ENCODE measurements at regions of chr22 and their contacts with region 1.

Region 1: DNA sequence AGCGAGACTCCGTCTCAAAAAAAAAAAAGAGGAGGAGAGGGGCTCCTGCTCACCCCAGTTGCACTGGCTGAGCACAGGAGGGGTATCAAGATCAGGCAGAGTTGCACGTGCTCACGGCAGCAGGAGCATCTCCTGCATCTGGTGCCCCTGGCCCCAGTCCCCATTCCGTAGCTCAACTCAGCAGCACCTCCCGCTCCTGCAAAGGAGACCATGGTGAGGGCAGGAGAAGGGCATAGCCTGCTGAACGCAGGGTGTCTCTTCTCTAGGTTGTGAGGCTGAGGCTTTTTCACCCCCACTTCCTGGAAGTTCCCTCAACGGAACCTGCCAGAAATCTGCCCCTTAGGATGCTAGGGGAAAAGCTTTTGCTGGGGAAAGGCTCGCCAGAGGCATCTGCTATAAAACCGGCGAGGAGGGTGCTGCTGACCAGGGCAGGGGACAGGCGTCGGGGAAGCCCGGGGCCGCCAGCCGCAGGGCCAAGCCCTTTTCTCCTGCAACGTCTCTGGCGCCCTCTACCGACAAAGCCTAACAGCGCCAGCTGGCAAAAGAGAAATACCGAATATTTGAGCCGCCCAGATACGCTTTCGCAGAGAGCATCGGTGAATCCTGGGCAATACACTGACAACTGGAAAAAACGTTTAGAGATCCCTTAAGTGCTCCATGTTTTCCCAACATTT is 1.0 kb upstream of the PPP6R2 start:
- DNase-seq: peak; percentile 92

Region 2: GRCh38 chr22:50252081-50253045 is 89.8 kb before region 1 on chr22:
- intact Hi-C with region 1: loop called (anchors 2 kb)
- DNase-seq: peak; percentile 88